ENCODE measurements at regions of chr2 and their contacts with region 1.

Region 1: DNA sequence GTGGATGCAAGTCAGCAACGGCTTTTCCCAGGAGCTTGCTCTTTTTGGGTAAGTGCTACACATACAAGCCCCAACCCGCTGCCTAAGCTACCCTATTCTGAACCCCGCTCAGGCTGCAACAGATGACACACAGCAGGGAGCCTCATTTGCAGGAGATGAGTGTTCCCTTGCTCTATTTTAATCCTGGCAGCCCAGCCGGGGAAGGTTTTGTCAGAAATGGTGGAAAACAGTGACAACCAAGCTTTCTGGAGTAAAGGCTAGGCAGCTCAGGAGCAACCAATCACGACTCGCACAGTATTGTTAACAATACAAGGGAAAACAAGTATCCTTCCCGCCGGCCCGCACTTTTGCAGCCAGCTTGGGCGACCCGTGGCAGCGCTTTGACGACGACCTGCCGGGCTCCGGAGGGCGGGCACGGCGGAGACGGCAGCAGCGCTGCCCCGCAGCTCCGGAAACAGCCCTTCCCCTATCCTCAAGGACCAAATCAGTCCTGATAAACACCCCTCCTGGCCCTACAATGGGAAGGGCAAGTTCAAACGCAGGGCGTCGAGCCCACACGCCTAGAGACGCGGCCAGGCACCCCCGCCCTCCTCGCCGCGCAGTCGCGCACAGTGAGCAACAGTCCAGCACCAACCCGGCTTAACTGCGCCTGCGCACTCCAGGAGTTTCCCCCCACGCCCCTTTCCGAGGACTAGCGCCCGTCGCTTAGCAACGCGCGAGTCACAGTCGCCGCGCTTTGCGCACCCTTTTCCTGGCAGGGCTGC is 74.3 kb upstream of the TSPYL6 start:
- DNase-seq: peak; percentile 99
- ATAC-seq: peak; percentile 98

Region 2: GRCh38 chr2:54206596-54206995 is 123.7 kb before region 1 on chr2:
- intact Hi-C with region 1: loop called (anchors 10 kb)
- DNase-seq: no peak
- ATAC-seq: peak; percentile 42